ENCODE measurements at regions of chr11 and their contacts with region 1.

Region 1: GRCh38 chr11:6377902-6378639 is 12.2 kb upstream of the SMPD1 start:
- DNase-seq: no peak
- H3K4me3 ChIP-seq: no peak overlapping the region
- H3K4me3 Mint-ChIP-seq: no peak overlapping the region
- H3K27ac Mint-ChIP-seq: no peak overlapping the region
- H3K4me1 ChIP-seq: peaks cover 8% of the 10 kb centered on the region
- H3K4me1 Mint-ChIP-seq: peaks cover 7% of the 10 kb centered on the region
- H3K27me3 ChIP-seq: no peaks in the 10 kb centered on the region
- H3K27me3 Mint-ChIP-seq: no peaks in the 10 kb centered on the region
- CTCF ChIP-seq: no peak

Region 2: DNA sequence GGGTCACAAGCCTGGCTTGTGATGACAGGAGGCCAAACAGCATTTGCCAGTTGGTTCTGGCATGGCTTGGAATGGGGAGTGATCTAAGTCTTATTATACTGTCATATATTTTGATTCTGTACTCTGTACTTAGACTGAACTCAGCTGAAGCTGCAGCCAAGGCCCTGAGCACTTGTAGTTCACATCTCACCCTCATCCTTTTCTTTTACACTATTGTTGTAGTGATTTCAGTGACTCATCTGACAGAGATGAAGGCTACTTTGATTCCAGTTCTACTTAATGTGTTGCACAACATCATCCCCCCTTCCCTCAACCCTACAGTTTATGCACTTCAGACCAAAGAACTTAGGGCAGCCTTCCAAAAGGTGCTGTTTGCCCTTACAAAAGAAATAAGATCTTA is 641.0 kb before region 1 on chr11:
- CTCF ChIA-PET with region 1: no interaction called
- POLR2A ChIA-PET with region 1: no interaction called
- intact Hi-C with region 1: no loop called
- DNase-seq: no peak
- H3K4me3 ChIP-seq: no peak overlapping the region
- H3K4me3 Mint-ChIP-seq: no peak overlapping the region
- H3K27ac Mint-ChIP-seq: no peak overlapping the region
- H3K4me1 ChIP-seq: no peaks in the 10 kb centered on the region
- H3K4me1 Mint-ChIP-seq: no peaks in the 10 kb centered on the region
- H3K27me3 ChIP-seq: no peaks in the 10 kb centered on the region
- H3K27me3 Mint-ChIP-seq: peaks cover 6% of the 10 kb centered on the region
- CTCF ChIP-seq: no peak

Region 3: GRCh38 chr11:6251120-6251733 is 126.8 kb before region 1 on chr11:
- CTCF ChIA-PET with region 1: no interaction called
- POLR2A ChIA-PET with region 1: no interaction called
- intact Hi-C with region 1: no loop called
- DNase-seq: peak; percentile 81 to 83
- H3K4me3 ChIP-seq: no peak overlapping the region
- H3K4me3 Mint-ChIP-seq: no peak overlapping the region
- H3K27ac Mint-ChIP-seq: no peak overlapping the region
- H3K4me1 ChIP-seq: peaks cover 15% of the 10 kb centered on the region
- H3K4me1 Mint-ChIP-seq: peaks cover 17% of the 10 kb centered on the region
- H3K27me3 ChIP-seq: no peaks in the 10 kb centered on the region
- H3K27me3 Mint-ChIP-seq: no peaks in the 10 kb centered on the region
- CTCF ChIP-seq: peak; percentile 69 to 91

Region 4: DNA sequence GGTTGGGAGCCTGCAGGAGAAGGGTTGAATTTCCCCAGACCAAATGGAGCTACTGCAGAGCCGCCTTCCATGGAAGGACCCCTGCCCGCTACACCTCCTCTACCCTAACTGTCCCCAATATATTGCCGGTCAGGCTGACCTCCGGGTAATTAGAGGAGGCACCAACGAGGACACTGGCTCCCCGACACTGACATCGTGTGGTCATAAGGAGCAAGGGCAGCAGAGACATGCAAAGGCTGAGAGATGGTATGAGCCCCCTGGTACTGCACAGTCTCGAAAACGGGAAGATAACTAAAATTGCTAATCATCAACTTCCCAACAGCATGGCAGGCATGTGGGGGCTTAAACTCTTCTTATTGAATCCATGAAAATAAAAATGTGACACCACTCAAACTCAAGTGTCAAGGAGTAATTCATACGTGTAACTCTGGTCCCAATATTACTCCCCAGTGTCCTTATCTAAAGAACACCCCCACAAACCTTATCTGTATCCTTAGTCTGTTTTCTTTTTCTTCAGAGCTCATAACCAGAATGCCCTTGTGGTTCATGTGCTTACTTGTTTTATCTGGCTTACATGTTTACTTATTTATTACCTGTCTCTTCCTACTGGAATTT is 62.2 kb before region 1 on chr11:
- CTCF ChIA-PET with region 1: no interaction called
- POLR2A ChIA-PET with region 1: no interaction called
- intact Hi-C with region 1: no loop called
- DNase-seq: peak; percentile 61 to 68
- H3K4me3 ChIP-seq: no peak overlapping the region
- H3K4me3 Mint-ChIP-seq: no peak overlapping the region
- H3K27ac Mint-ChIP-seq: no peak overlapping the region
- H3K4me1 ChIP-seq: 0 out of 2 replicates have a peak, but pooled peaks cover 6% of the 10 kb centered on the region
- H3K4me1 Mint-ChIP-seq: peaks cover 9% of the 10 kb centered on the region
- H3K27me3 ChIP-seq: no peaks in the 10 kb centered on the region
- H3K27me3 Mint-ChIP-seq: peaks cover 4% of the 10 kb centered on the region
- CTCF ChIP-seq: peak; percentile 86 to 96

Region 5: GRCh38 chr11:6353367-6353987 is 24.6 kb before region 1 on chr11:
- CTCF ChIA-PET with region 1: interaction called, 14 read pairs
- POLR2A ChIA-PET with region 1: no interaction called
- intact Hi-C with region 1: no loop called
- DNase-seq: peak; percentile 91 to 92
- H3K4me3 ChIP-seq: no peak overlapping the region
- H3K4me3 Mint-ChIP-seq: no peak overlapping the region
- H3K27ac Mint-ChIP-seq: no peak overlapping the region
- H3K4me1 ChIP-seq: peaks cover 10% of the 10 kb centered on the region
- H3K4me1 Mint-ChIP-seq: peaks cover 24% of the 10 kb centered on the region
- H3K27me3 ChIP-seq: no peaks in the 10 kb centered on the region
- H3K27me3 Mint-ChIP-seq: no peaks in the 10 kb centered on the region
- CTCF ChIP-seq: peak; percentile 87 to 96

Region 6: GRCh38 chr11:6404342-6405051 is 26.4 kb after region 1 on chr11:
- CTCF ChIA-PET with region 1: interaction called, 15 read pairs
- POLR2A ChIA-PET with region 1: interaction called, 3 read pairs
- intact Hi-C with region 1: no loop called
- DNase-seq: no peak
- H3K4me3 ChIP-seq: no peak overlapping the region
- H3K4me3 Mint-ChIP-seq: no peak overlapping the region
- H3K27ac Mint-ChIP-seq: peak overlapping the region; percentile 49
- H3K4me1 ChIP-seq: peaks cover 43% of the 10 kb centered on the region
- H3K4me1 Mint-ChIP-seq: peaks cover 44% of the 10 kb centered on the region
- H3K27me3 ChIP-seq: no peaks in the 10 kb centered on the region
- H3K27me3 Mint-ChIP-seq: no peaks in the 10 kb centered on the region
- CTCF ChIP-seq: no peak

Region 7: GRCh38 chr11:6443269-6444003 is 65.4 kb after region 1 on chr11:
- CTCF ChIA-PET with region 1: interaction called, 190 read pairs
- POLR2A ChIA-PET with region 1: interaction called, 5 read pairs
- intact Hi-C with region 1: loop called (anchors 1 kb)
- DNase-seq: peak; percentile 66 to 68
- H3K4me3 ChIP-seq: no peak overlapping the region
- H3K4me3 Mint-ChIP-seq: no peak overlapping the region
- H3K27ac Mint-ChIP-seq: no peak overlapping the region
- H3K4me1 ChIP-seq: peaks cover 29% of the 10 kb centered on the region
- H3K4me1 Mint-ChIP-seq: peaks cover 7% of the 10 kb centered on the region
- H3K27me3 ChIP-seq: no peaks in the 10 kb centered on the region
- H3K27me3 Mint-ChIP-seq: no peaks in the 10 kb centered on the region
- CTCF ChIP-seq: peak; percentile 79 to 85

Region 8: DNA sequence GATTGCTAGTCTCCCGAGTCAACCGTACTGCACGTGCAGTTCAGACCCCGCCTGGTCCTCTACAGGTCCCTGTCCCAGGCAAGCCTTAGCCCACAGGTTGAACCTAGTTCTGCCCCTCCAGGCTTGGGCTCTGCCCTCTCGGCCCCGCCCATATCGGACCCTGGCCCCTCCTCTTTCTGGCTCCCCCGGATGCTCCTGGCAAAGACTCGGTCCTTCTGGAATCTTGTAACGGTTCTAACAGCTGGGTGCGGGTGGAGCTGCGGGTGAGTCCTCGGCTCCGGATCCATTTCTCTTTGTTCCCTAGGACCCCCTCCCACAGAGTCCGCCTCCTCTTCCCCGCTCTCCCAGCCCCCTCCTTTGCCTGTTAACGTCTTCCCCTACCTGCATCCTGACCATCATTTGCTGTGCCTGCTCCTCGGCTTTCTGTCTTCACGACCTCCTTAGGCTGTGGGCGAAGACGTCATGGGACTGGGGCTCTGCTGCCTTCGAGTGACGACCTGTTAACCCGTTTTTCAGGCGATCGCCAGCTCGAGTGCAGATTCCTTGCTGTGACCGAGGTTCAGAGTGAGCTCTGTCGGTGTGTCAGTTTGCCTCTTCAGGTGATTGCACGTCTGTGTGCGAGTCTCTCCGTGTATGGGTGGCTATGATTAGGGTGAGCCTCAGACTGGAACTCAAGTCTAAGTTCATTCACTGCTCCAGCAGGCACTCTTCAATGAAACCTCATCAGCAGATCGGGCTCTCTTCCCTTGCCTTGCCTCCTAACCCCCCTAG is 119.2 kb after region 1 on chr11 and contains the start of gene DNHD1:
- CTCF ChIA-PET with region 1: interaction called, 13 read pairs
- POLR2A ChIA-PET with region 1: no interaction called
- intact Hi-C with region 1: no loop called
- DNase-seq: no peak
- H3K4me3 ChIP-seq: no peak within 1 kb of the TSS
- H3K4me3 Mint-ChIP-seq: no peak within 1 kb of the TSS
- H3K27ac Mint-ChIP-seq: peak within 1 kb of the TSS; percentile 6
- H3K4me1 ChIP-seq: no peaks in the 10 kb centered on the region
- H3K4me1 Mint-ChIP-seq: peaks cover 17% of the 10 kb centered on the region
- H3K27me3 ChIP-seq: no peaks in the 10 kb centered on the region
- H3K27me3 Mint-ChIP-seq: no peaks in the 10 kb centered on the region
- CTCF ChIP-seq: no peak
- total RNA-seq, gene DNHD1: 5.7 and 6.7 TPM in 2 replicates

Region 9: GRCh38 chr11:6603287-6604080 is 225.4 kb after region 1 on chr11 and contains the starts of genes ILK and RRP8:
- CTCF ChIA-PET with region 1: interaction called, 11 read pairs
- POLR2A ChIA-PET with region 1: no interaction called
- intact Hi-C with region 1: no loop called
- DNase-seq: peak; percentile 90 to 93
- H3K4me3 ChIP-seq: peak within 1 kb of the TSS; percentile 60
- H3K4me3 Mint-ChIP-seq: no peak within 1 kb of the TSS
- H3K27ac Mint-ChIP-seq: no peak within 1 kb of the TSS
- H3K4me1 ChIP-seq: peaks cover 38% of the 10 kb centered on the region
- H3K4me1 Mint-ChIP-seq: peaks cover 17% of the 10 kb centered on the region
- H3K27me3 ChIP-seq: no peaks in the 10 kb centered on the region
- H3K27me3 Mint-ChIP-seq: no peaks in the 10 kb centered on the region
- CTCF ChIP-seq: peak in 1 of 2 experiments; percentile 12
- total RNA-seq, gene ILK: 117 and 119 TPM in 2 replicates
- total RNA-seq, gene RRP8: 20.0 and 21.0 TPM in 2 replicates

Region 10: GRCh38 chr11:6705905-6706535 is 327.9 kb after region 1 on chr11:
- CTCF ChIA-PET with region 1: interaction called, 12 read pairs
- POLR2A ChIA-PET with region 1: no interaction called
- intact Hi-C with region 1: no loop called
- DNase-seq: peak in 1 of 2 experiments; percentile 60
- H3K4me3 ChIP-seq: no peak overlapping the region
- H3K4me3 Mint-ChIP-seq: no peak overlapping the region
- H3K27ac Mint-ChIP-seq: no peak overlapping the region
- H3K4me1 ChIP-seq: no peaks in the 10 kb centered on the region
- H3K4me1 Mint-ChIP-seq: peaks cover 7% of the 10 kb centered on the region
- H3K27me3 ChIP-seq: no peaks in the 10 kb centered on the region
- H3K27me3 Mint-ChIP-seq: peaks cover 2% of the 10 kb centered on the region
- CTCF ChIP-seq: peak; percentile 91 to 92